Activated CD4-positive, alpha-beta T cell treated with anti-CD3 and anti-CD28 coated beads for 36 hours (primary cell): ENCODE measurements at regions of chr4 and their contacts with region 1.

Region 1: DNA sequence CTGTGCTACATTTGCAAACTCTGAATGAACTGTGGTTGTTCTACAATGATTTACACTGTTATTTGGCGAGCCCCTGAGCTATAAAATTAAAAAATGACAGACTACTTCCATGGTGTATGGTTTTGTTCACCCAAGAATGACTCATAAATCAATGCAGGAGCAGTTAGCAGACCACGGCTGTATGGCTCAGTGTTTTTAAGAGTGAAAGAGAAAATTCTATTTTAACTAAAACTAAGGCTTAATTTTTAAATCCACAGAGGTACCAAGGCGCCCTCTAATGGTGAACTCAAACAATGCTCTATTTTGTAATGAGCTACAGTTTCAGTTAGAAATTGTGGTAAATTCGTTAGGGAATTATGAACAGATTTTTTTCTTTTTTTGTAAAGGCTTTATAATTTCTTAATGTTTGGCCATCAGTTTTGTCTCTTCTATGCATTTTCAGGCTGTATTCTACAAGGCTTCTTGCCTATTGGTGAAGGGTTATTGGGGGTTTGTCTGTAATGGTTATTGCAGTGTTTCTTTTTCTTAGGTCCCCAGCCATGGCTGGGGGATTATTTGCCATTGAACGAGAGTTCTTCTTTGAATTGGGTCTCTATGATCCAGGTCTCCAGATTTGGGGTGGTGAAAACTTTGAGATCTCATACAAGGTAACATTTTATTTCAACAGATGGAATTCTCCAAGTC is 32.5 kb downstream of the HMGB2 start:
- DNase-seq: peak; percentile 31
- ATAC-seq: peak; percentile 81
- H3K4me3 Mint-ChIP-seq: no peak overlapping the region
- H3K27ac Mint-ChIP-seq: no peak overlapping the region
- H3K4me1 Mint-ChIP-seq: peaks cover 2% of the 10 kb centered on the region
- H3K27me3 Mint-ChIP-seq: no peaks in the 10 kb centered on the region

Region 2: GRCh38 chr4:172975651-172976229 is 325.9 kb before region 1 on chr4:
- CTCF ChIA-PET with region 1: no interaction called
- POLR2A ChIA-PET with region 1: no interaction called
- intact Hi-C with region 1: no loop called
- DNase-seq: no peak
- ATAC-seq: no peak
- H3K4me3 Mint-ChIP-seq: no peak overlapping the region
- H3K27ac Mint-ChIP-seq: no peak overlapping the region
- H3K4me1 Mint-ChIP-seq: no peaks in the 10 kb centered on the region
- H3K27me3 Mint-ChIP-seq: peaks cover 6% of the 10 kb centered on the region

Region 3: GRCh38 chr4:173025131-173025530 is 276.5 kb before region 1 on chr4:
- CTCF ChIA-PET with region 1: interaction called, 14 read pairs
- POLR2A ChIA-PET with region 1: no interaction called
- intact Hi-C with region 1: loop called (anchors 1 kb)
- DNase-seq: peak; percentile 26
- ATAC-seq: peak; percentile 65
- H3K4me3 Mint-ChIP-seq: no peak overlapping the region
- H3K27ac Mint-ChIP-seq: no peak overlapping the region
- H3K4me1 Mint-ChIP-seq: peaks cover 4% of the 10 kb centered on the region
- H3K27me3 Mint-ChIP-seq: no peaks in the 10 kb centered on the region

Region 4: DNA sequence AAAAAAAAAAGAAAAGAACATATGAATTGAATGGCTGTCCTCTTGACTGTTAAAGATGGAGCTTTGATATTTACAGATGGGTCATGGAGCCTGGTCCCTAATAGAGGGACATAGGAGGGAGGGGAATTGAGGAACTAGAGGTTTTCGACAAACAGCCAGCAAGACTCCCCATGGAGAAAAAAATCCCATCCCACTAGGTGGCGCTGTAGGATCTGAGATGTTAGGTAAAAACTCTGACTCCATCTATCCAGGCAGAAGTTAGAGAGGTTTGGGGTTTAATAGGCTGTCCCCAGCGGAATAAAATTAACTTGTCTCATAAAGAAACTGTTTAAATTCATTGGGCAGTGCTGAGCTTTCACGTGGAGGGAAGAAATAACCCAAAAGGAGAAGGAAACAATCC is 13.4 kb before region 1 on chr4:
- CTCF ChIA-PET with region 1: interaction called, 30 read pairs
- POLR2A ChIA-PET with region 1: no interaction called
- intact Hi-C with region 1: no loop called
- DNase-seq: peak; percentile 86
- ATAC-seq: peak; percentile 46
- H3K4me3 Mint-ChIP-seq: no peak overlapping the region
- H3K27ac Mint-ChIP-seq: peak overlapping the region; percentile 62
- H3K4me1 Mint-ChIP-seq: peaks cover 16% of the 10 kb centered on the region
- H3K27me3 Mint-ChIP-seq: no peaks in the 10 kb centered on the region

Region 5: DNA sequence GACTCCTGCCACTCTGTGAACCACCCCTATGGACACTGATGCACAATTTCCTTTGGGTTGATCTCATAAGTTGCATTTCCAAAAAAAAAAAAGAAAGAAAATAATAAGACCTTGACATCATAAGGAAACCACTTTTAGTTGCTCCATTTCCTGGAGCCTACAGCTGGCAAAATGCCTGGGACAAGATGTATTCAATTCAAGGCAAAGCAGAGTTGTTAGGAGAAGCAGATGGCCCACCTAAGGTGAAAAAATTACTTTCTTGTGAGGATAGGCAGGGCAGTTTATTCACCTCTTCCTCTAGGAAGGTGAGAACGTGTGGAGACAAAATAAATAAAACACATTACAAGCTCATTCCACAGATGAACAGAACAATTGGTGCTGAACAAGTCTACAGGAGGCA is 111.4 kb after region 1 on chr4:
- CTCF ChIA-PET with region 1: interaction called, 11 read pairs
- POLR2A ChIA-PET with region 1: no interaction called
- intact Hi-C with region 1: no loop called
- DNase-seq: no peak
- ATAC-seq: no peak
- H3K4me3 Mint-ChIP-seq: no peak overlapping the region
- H3K27ac Mint-ChIP-seq: no peak overlapping the region
- H3K4me1 Mint-ChIP-seq: no peaks in the 10 kb centered on the region
- H3K27me3 Mint-ChIP-seq: no peaks in the 10 kb centered on the region